MCF 10A (cell line): ENCODE measurements at regions of chr19 and their contacts with region 1.

Region 1: DNA sequence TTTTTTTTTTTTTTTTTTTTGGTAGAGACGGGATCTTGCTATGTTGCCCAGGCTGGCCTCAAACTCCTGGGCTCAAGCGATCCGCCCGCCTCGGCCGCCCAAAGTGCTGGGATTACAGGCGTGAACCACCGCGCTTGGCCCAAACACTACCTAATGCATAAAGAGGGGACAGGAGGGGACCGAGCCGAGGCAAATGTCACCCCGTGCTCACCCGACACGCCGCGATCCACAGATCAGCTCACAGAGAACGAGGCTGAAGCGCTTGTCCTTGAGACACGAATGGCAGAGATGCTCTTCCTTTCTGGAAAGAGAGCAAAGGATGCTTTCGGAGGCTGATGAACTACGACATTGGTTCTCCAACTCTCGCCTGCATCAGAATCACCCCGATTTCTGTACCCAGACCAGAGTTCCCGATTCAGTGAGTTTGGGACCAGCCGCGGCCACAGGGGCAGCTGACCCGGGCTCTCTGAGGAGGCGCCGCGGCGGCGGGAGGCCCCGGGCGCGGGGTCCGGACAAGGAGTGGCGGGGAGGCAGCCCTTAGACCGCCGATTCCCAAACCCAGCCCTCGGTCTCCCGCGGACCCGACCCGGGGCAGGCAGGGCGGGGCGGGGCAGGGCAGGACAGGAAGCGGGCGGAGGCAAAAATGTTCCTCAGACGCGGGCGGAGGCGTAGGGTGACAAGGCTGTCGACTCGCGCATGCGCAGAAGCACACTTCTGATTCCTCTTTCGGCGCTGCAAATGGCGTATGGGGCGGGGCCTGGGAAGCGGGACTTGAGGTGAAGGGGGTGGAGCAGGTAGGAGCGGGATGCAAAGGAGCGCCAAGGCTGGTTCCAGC is at the start of gene ZNF699:
- DNase-seq: peak; percentile 99
- H3K4me3 Mint-ChIP-seq: peak within 1 kb of the TSS; percentile 92
- H3K27ac Mint-ChIP-seq: peak within 1 kb of the TSS; percentile 81
- H3K4me1 Mint-ChIP-seq: peaks cover 6% of the 10 kb centered on the region
- H3K27me3 Mint-ChIP-seq: no peaks in the 10 kb centered on the region
- CTCF ChIP-seq: no peak
- total RNA-seq, gene ZNF699: 6.4 and 6.7 TPM in 2 replicates

Region 2: DNA sequence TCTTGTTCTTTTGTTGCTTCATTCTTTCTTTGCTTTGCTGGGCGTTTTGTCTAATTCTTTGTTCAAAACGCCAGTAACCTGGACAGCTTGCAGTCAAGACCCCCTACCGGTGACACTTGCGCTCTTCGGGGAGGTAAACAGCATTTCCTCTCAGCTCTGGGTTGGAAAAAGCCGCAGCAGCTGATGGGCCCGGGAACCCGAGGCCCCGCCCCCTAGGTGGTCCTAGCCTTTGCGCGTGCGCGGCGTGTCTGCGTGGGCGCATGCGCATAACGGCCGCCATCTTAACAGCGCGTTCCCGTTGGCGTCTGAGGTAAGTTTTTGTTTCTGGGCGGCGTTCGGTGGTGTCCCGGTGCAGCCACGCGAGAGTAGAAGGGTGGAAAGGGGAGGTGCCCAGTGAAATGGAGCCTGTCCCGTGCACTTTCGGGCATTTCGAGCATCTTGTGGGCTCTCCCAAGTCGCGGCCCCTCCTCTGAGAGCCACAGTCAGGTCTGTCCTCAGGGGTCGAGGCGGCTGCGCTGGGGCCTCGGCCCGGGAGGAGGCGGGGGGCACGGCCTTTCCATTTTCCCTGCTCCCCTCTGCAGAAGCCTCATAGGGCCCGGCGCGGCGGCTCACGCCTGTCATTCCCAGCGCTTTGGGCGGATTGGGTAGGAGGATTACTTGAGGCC is 14.7 kb after region 1 on chr19 and contains the start of gene ZNF559:
- CTCF ChIA-PET with region 1: interaction called, 8 read pairs
- POLR2A ChIA-PET with region 1: interaction called, 14 read pairs
- intact Hi-C with region 1: no loop called
- DNase-seq: peak; percentile 95
- H3K4me3 Mint-ChIP-seq: peak within 1 kb of the TSS; percentile 79
- H3K27ac Mint-ChIP-seq: peak within 1 kb of the TSS; percentile 50
- H3K4me1 Mint-ChIP-seq: no peaks in the 10 kb centered on the region
- H3K27me3 Mint-ChIP-seq: no peaks in the 10 kb centered on the region
- CTCF ChIP-seq: no peak
- total RNA-seq, gene ZNF559: 10.7 and 13.1 TPM in 2 replicates

Region 3: DNA sequence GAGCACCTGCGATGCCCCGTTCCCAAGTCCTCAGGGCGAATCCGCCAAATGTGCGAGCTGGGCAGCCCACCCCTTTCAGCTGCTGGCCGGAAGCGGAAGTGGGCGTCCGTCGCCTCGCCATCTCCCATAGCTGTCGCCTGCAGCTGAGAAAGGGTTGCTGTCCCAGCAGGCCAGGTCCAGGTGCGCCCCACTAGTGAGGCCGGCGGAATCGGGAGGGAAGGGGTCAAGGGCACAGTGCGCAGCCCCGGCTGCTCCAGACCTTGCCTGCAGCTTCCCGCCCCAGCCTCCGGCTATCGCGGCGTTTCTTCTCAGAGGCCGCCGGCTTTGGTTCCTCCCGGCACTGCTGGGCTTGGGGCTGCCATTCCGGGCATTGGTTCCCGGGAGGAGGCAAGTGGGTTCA is 53.5 kb after region 1 on chr19 and contains the start of gene ZNF177:
- CTCF ChIA-PET with region 1: no interaction called
- POLR2A ChIA-PET with region 1: no interaction called
- intact Hi-C with region 1: no loop called
- DNase-seq: no peak
- H3K4me3 Mint-ChIP-seq: no peak within 1 kb of the TSS
- H3K27ac Mint-ChIP-seq: no peak within 1 kb of the TSS
- H3K4me1 Mint-ChIP-seq: no peaks in the 10 kb centered on the region
- H3K27me3 Mint-ChIP-seq: no peaks in the 10 kb centered on the region
- CTCF ChIP-seq: no peak
- total RNA-seq, gene ZNF177: 0.79 and 3.0 TPM in 2 replicates

Region 4: GRCh38 chr19:9435279-9436268 is 126.2 kb after region 1 on chr19 and contains the start of gene ZNF266:
- CTCF ChIA-PET with region 1: interaction called, 5 read pairs
- POLR2A ChIA-PET with region 1: interaction called, 12 read pairs
- intact Hi-C with region 1: loop called (anchors 2 kb)
- DNase-seq: peak; percentile 89
- H3K4me3 Mint-ChIP-seq: peak within 1 kb of the TSS; percentile 88
- H3K27ac Mint-ChIP-seq: peak within 1 kb of the TSS; percentile 98
- H3K4me1 Mint-ChIP-seq: peaks cover 9% of the 10 kb centered on the region
- H3K27me3 Mint-ChIP-seq: no peaks in the 10 kb centered on the region
- CTCF ChIP-seq: peak; percentile 72
- total RNA-seq, gene ZNF266: 17.0 and 23.7 TPM in 2 replicates